Tibial artery (tissue), 4 donors: ENCODE measurements at regions of chr3 and their contacts with region 1.

Region 1: DNA sequence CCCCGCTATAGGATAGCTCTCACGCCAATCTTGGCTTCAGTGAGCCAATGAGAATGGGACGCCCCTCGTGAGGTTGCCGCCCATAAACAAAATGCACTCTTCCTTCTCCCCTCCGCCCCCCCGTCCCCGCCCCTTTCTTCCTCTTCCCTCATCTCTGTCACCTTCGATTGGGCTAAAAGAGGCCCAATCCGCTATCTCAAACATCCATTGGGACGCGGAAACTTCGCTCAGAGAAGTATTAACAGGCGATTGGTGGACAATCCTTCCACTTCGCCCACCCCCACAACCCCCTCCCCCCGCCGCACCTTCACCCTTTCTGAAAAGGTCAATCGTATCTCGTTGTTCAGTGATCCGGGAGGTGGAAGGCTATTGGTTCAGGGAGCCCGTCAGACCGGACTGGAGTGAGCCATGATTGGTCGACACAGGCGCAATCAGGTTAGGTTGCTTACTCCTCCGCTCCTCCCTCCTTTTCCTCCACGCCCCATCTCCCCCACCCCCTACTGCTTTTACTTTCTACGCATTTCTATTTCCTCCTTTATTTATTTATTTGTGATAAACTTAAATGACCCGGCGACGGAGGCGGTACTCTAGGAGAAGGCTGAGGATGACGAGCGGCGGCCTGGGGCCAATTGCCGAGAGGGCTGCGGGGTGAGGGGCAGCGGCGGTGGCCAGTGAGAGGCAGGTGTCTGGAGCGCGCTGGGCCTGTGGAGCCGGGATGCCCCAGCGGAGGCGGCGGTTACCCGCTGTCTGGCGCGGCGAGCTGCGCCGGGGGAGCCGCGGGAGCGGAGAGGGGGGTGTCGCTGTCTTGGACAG is 447 bp upstream of the ZBTB20 start:
- DNase-seq: peak; percentile 99 to 100
- H3K4me3 ChIP-seq: peak overlapping the region; percentile 88 to 95
- H3K27ac ChIP-seq: peak overlapping the region; percentile 98 to 99
- H3K4me1 ChIP-seq: peaks cover 0 to 22% (median 9%) of the 10 kb centered on the region in 4 donors
- H3K27me3 ChIP-seq: no peaks in the 10 kb centered on the region
- CTCF ChIP-seq: no peak

Region 2: DNA sequence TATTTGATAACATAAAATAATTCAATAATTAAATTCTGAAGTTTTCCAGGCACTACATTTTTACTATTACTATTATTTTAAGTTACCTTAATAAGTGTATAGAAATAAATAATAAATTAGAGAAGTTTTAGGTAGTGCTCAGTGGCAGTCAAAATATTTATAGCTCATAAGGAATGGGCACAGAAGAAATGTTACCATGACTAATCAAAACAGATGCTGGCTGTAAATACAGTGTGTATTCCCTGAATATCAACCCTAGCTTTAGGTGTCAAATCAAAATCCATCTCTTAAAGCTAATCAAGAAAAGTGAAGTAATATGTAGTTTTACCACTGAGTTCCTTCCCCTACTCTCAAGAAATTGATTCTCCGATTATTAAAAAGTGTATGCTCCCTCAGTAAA is 35.9 kb before region 1 on chr3:
- intact Hi-C with region 1: no loop called
- DNase-seq: no peak
- H3K4me3 ChIP-seq: no peak overlapping the region
- H3K27ac ChIP-seq: no peak overlapping the region
- H3K4me1 ChIP-seq: peaks cover 0 to 13% (median 0%) of the 10 kb centered on the region in 4 donors
- H3K27me3 ChIP-seq: no peaks in the 10 kb centered on the region
- CTCF ChIP-seq: no peak

Region 3: GRCh38 chr3:115658337-115659181 is 511.0 kb after region 1 on chr3:
- intact Hi-C with region 1: loop called (anchors 1 kb)
- DNase-seq: peak; percentile 78 to 90
- H3K4me3 ChIP-seq: peak overlapping the region; percentile 71 to 89
- H3K27ac ChIP-seq: peak overlapping the region; percentile 93 to 98
- H3K4me1 ChIP-seq: peaks cover 0 to 19% (median 7%) of the 10 kb centered on the region in 4 donors
- H3K27me3 ChIP-seq: no peaks in the 10 kb centered on the region
- CTCF ChIP-seq: no peak